Left lung (tissue), 14 donors: ENCODE measurements at regions of chr1 and their contacts with region 1.

Region 1: GRCh38 chr1:227437495-227438008 is 119.3 kb upstream of the CDC42BPA start:
- DNase-seq: peak in 2 of 4 donors; percentile 51 to 69
- ATAC-seq: peak; percentile 92
- H3K4me3 ChIP-seq: peak overlapping the region in 1 of 2 donors; percentile 15
- H3K27ac ChIP-seq: no peak overlapping the region
- H3K4me1 ChIP-seq: no peaks in the 10 kb centered on the region
- H3K27me3 ChIP-seq: no peaks in the 10 kb centered on the region
- CTCF ChIP-seq: peak; percentile 20 to 21

Region 2: GRCh38 chr1:227234998-227235405 is 202.6 kb before region 1 on chr1:
- intact Hi-C with region 1: loop called in 1 of 2 experiments (anchors 10 kb)
- DNase-seq: peak in 2 of 4 donors; percentile 14 to 44
- ATAC-seq: peak; percentile 74
- H3K4me3 ChIP-seq: no peak overlapping the region
- H3K27ac ChIP-seq: no peak overlapping the region
- H3K4me1 ChIP-seq: no peaks in the 10 kb centered on the region
- H3K27me3 ChIP-seq: no peaks in the 10 kb centered on the region
- CTCF ChIP-seq: peak; percentile 17 to 30